GM12878 (cell line): ENCODE measurements at regions of chr13 and their contacts with region 1.

Region 1: GRCh38 chr13:20057963-20058362 is 99.4 kb downstream of the ZMYM2 start:
- DNase-seq: no peak
- ATAC-seq: no peak
- H3K4me3 ChIP-seq: no peak overlapping the region
- H3K27ac ChIP-seq: no peak overlapping the region
- H3K4me1 ChIP-seq: no peaks in the 10 kb centered on the region
- H3K27me3 ChIP-seq: no peaks in the 10 kb centered on the region
- CTCF ChIP-seq: no peak
- EP300 ChIP-seq: no peak
- POLR2A ChIP-seq: no peak
- RAD21 ChIP-seq: no peak

Region 2: DNA sequence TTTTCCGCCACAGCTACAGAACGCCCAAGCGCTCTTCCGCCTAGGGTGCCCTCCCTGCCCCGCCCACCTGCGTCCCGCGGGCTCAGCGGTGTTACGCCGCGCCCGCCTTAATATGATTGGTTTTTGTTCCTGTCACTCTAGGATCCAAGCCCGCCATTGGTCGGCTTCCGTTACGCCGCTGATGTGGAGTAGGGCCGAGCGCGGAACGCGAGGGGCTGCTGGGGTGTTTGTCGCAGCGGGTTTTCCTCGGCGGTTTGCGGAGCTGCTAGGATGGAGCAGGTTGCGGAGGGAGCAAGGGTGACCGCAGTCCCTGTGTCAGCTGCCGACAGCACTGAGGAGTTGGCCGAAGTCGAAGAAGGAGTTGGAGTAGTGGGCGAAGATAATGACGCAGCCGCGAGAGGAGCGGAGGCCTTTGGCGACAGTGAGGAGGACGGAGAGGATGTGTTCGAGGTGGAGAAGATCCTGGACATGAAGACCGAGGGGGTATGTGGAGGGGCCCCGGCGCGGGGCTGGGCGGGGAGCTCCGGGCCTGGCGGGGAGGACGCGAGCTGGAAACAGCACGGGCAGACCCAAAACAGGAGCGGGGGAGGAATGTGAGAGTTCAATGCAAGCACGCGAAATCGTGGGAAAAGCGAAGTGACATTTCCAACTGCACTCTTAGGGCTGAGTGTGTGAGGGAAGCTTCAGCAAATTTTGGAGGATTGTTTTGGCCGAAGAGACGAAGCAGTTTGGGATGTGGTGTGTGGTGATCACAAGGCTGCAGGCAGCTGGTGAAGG is 424.3 kb before region 1 on chr13 and contains the start of gene MPHOSPH8:
- CTCF ChIA-PET with region 1: no interaction called
- POLR2A ChIA-PET with region 1: interaction called, 10 read pairs
- RAD21 ChIA-PET with region 1: no interaction called
- SMC1A ChIA-PET with region 1: no interaction called
- in situ Hi-C with region 1: no loop called
- intact Hi-C with region 1: no loop called
- DNase-seq: peak; percentile 84
- ATAC-seq: peak; percentile 98
- H3K4me3 ChIP-seq: peak within 1 kb of the TSS; percentile 97
- H3K27ac ChIP-seq: peak within 1 kb of the TSS; percentile 86
- H3K4me1 ChIP-seq: no peaks in the 10 kb centered on the region
- H3K27me3 ChIP-seq: no peaks in the 10 kb centered on the region
- CTCF ChIP-seq: no peak
- EP300 ChIP-seq: no peak
- POLR2A ChIP-seq: peak; percentile 83
- RAD21 ChIP-seq: no peak
- polyA plus RNA-seq, gene MPHOSPH8: 16.6 to 29.3 TPM